Right ventricle myocardium inferior (tissue), 1 donor: ENCODE measurements at regions of chr2 and their contacts with region 1.

Region 1: GRCh38 chr2:165953655-165954606 is at the start of gene TTC21B:
- DNase-seq: peak; percentile 97
- ATAC-seq: peak; percentile 100
- total RNA-seq, gene TTC21B: 15.6 TPM

Region 2: DNA sequence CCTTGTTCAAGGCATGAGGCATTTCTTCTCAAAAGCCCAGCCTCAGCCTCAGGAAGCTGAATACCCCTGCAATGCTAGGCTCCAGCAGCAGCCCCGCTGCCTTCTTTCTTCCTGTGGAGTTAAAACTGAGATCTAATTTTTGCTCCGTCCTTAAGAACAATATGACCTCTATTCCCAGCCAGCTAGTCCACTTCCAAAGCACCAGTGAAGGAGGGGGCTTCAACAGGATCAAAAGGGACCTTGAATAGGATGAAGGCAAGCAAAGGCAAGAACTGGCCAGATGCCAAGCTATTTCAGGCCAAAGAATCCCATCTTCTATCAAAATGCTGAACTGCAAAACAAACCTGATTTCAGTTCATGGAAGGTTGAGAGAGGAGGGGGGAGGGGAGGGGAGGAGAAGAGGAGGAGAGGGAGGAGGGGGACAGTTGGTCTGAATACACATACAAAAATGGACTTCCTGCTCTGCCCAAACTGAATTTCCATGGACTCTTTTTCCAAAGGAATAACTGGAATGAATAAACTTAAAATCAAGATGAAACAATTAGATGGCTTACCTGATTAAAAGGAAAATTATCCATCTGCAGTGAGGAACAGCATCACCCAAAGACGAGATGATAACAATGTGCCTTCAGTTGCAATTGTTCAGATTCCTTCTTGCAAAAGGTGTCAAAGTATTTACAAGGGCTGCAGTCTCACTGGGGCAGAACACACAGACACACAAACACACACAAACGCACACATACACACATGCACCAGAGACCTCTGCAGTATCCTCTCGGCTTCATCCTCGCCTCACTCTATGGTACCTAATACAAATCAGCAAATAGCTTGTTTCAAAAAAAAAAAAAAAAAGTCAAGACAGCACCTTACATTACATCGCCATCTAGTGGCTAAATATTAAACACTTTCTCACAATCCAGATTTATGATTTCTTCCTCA is 173.6 kb after region 1 on chr2 and contains the start of gene SCN1A:
- intact Hi-C with region 1: loop called (anchors 2 kb)
- DNase-seq: peak; percentile 25
- ATAC-seq: no peak
- total RNA-seq, gene SCN1A: 0.38 TPM

Region 3: GRCh38 chr2:166180951-166181812 is 227.3 kb after region 1 on chr2:
- intact Hi-C with region 1: loop called (anchors 5 kb)
- DNase-seq: peak; percentile 68
- ATAC-seq: no peak